ENCODE measurements at regions of chr7 and their contacts with region 1.

Region 1: GRCh38 chr7:13217768-13218167 is 530.3 kb downstream of the ARL4A start:
- DNase-seq: no peak
- H3K4me3 ChIP-seq: no peak overlapping the region
- H3K27ac ChIP-seq: no peak overlapping the region
- H3K4me1 ChIP-seq: peaks cover 0 to 4% of the 10 kb centered on the region in 2 donors
- H3K27me3 ChIP-seq: no peaks in the 10 kb centered on the region
- CTCF ChIP-seq: no peak
- POLR2A ChIP-seq: no peak

Region 2: DNA sequence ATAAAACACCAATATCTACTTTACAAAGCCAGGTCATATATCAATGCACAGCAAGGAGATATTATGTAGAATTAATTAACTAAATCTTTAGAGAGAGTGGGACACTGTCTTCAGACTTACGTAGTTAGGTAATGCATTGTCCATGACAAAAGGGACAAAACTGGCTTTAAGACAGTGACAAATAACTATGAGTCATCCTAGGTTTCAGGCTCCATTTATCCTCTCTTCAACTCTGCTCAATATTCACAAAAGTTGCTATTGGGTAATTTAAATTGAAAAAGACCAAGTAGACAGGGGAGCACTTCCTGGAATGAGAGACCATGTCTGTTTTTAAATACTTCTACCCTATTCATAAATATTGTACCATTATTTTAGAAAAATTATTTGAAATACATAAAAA is 65.8 kb before region 1 on chr7:
- intact Hi-C with region 1: loop called (anchors 2 kb)
- DNase-seq: no peak
- H3K4me3 ChIP-seq: no peak overlapping the region
- H3K27ac ChIP-seq: no peak overlapping the region
- H3K4me1 ChIP-seq: no peaks in the 10 kb centered on the region
- H3K27me3 ChIP-seq: no peaks in the 10 kb centered on the region
- CTCF ChIP-seq: no peak
- POLR2A ChIP-seq: no peak